Activated CD4-positive, alpha-beta T cell treated with anti-CD3 and anti-CD28 coated beads for 36 hours (primary cell): ENCODE measurements at regions of chr4 and their contacts with region 1.

Region 1: GRCh38 chr4:139988863-139989733 is 164.9 kb downstream of the MAML3 start:
- DNase-seq: peak; percentile 76
- ATAC-seq: peak; percentile 99
- H3K4me3 Mint-ChIP-seq: no peak overlapping the region
- H3K27ac Mint-ChIP-seq: no peak overlapping the region
- H3K4me1 Mint-ChIP-seq: peaks cover 14% of the 10 kb centered on the region
- H3K27me3 Mint-ChIP-seq: no peaks in the 10 kb centered on the region

Region 2: GRCh38 chr4:141121768-141122454 is 1132.8 kb after region 1 on chr4:
- CTCF ChIA-PET with region 1: no interaction called
- POLR2A ChIA-PET with region 1: no interaction called
- intact Hi-C with region 1: loop called in 1 of 2 experiments (anchors 5 kb)
- DNase-seq: peak; percentile 66
- ATAC-seq: peak; percentile 99
- H3K4me3 Mint-ChIP-seq: no peak overlapping the region
- H3K27ac Mint-ChIP-seq: no peak overlapping the region
- H3K4me1 Mint-ChIP-seq: peaks cover 14% of the 10 kb centered on the region
- H3K27me3 Mint-ChIP-seq: peaks cover 33% of the 10 kb centered on the region